ENCODE measurements at regions of chr17 and their contacts with region 1.

Region 1: GRCh38 chr17:48492401-48493298 is 38.2 kb downstream of the HOXB1 start:
- DNase-seq: peak; percentile 73
- ATAC-seq: peak; percentile 85
- H3K4me3 ChIP-seq: peak overlapping the region; percentile 11 to 76 (median 54)
- H3K4me3 Mint-ChIP-seq: peak overlapping the region; percentile 78
- H3K27ac ChIP-seq: no peak overlapping the region
- H3K27ac Mint-ChIP-seq: peak overlapping the region; percentile 10
- H3K4me1 ChIP-seq: peaks cover 19 to 22% of the 10 kb centered on the region in 2 donors
- H3K4me1 Mint-ChIP-seq: peaks cover 20% of the 10 kb centered on the region
- H3K27me3 ChIP-seq: peaks cover 0 to 33% (median 13%) of the 10 kb centered on the region in 4 experiments
- H3K27me3 Mint-ChIP-seq: peaks cover 51% of the 10 kb centered on the region
- CTCF ChIP-seq: peak; percentile 76

Region 2: DNA sequence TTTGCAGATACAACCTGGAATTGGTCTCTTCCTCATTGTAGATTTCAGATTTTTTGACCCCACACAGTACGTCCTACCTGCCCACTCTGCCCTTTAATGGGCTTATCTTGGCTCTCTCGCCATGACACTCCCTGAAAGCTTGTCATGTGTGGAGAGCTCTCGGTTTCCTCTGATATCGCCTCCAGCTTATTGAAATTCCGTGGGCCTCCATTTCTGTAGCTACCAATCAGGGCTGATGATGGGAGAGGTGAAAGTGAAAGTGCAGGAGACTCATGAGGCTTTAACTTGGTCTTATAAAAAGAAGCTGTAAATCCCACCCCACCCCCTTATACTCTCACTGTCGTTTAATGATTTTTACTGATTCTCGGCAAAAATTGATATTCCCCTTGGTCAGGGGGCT is 20.4 kb after region 1 on chr17:
- CTCF ChIA-PET with region 1: interaction called, 4 read pairs
- POLR2A ChIA-PET with region 1: no interaction called
- intact Hi-C with region 1: loop called (anchors 1 kb)
- DNase-seq: no peak
- ATAC-seq: no peak
- H3K4me3 ChIP-seq: no peak overlapping the region
- H3K4me3 Mint-ChIP-seq: peak overlapping the region; percentile 82
- H3K27ac ChIP-seq: no peak overlapping the region
- H3K27ac Mint-ChIP-seq: no peak overlapping the region
- H3K4me1 ChIP-seq: peaks cover 3 to 17% of the 10 kb centered on the region in 2 donors
- H3K4me1 Mint-ChIP-seq: peaks cover 23% of the 10 kb centered on the region
- H3K27me3 ChIP-seq: peaks cover 0 to 13% (median 9%) of the 10 kb centered on the region in 4 experiments
- H3K27me3 Mint-ChIP-seq: peaks cover 32% of the 10 kb centered on the region
- CTCF ChIP-seq: no peak

Region 3: DNA sequence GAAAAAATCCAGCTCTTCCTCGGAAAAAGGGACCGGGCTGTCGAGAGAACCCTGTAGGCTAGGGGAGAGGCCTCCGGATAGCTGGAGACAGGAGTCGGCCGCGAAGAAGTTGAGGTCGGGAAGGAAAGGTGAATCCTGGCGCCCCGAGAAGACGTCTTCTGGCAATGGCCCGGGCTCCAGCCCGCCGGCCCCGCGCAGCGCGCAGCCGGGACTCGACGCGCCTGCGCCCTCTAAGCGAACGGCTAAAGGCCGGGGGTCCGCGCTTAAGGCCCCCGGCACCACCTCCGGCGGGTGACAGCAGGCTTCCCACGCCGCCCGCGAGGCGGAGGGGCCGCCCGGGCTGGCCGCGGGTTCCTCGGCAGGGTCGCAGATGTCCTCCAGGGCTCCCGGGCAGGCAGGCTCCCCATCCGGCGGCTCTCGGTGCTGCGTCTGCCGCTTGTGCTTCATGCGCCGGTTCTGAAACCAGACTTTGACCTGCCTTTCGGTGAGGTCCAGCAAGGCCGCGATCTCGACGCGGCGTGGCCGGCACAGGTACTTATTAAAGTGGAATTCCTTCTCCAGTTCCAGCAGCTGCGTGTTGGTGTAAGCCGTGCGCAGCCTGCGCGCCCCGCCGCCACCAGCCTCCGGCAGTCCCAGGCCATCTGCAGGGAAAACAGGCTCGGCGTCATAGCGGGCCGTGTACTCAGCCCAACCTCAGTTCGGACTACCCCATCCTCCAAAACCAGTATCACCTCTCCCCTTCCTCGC is 50.6 kb after region 1 on chr17:
- CTCF ChIA-PET with region 1: interaction called, 3 read pairs
- POLR2A ChIA-PET with region 1: no interaction called
- intact Hi-C with region 1: loop called (anchors 10 kb)
- DNase-seq: peak; percentile 84
- ATAC-seq: peak; percentile 65
- H3K4me3 ChIP-seq: peak overlapping the region; percentile 31 to 73 (median 52)
- H3K4me3 Mint-ChIP-seq: peak overlapping the region; percentile 94
- H3K27ac ChIP-seq: peak overlapping the region; percentile 6 to 28
- H3K27ac Mint-ChIP-seq: peak overlapping the region; percentile 90
- H3K4me1 ChIP-seq: peaks cover 42 to 45% of the 10 kb centered on the region in 2 donors
- H3K4me1 Mint-ChIP-seq: peaks cover 31% of the 10 kb centered on the region
- H3K27me3 ChIP-seq: peaks cover 0 to 67% (median 28%) of the 10 kb centered on the region in 4 experiments
- H3K27me3 Mint-ChIP-seq: peaks cover 53% of the 10 kb centered on the region
- CTCF ChIP-seq: peak; percentile 17

Measured in B cell (primary cell).